PC-9 (cell line): ENCODE measurements at regions of chr17 and their contacts with region 1.

Region 1: DNA sequence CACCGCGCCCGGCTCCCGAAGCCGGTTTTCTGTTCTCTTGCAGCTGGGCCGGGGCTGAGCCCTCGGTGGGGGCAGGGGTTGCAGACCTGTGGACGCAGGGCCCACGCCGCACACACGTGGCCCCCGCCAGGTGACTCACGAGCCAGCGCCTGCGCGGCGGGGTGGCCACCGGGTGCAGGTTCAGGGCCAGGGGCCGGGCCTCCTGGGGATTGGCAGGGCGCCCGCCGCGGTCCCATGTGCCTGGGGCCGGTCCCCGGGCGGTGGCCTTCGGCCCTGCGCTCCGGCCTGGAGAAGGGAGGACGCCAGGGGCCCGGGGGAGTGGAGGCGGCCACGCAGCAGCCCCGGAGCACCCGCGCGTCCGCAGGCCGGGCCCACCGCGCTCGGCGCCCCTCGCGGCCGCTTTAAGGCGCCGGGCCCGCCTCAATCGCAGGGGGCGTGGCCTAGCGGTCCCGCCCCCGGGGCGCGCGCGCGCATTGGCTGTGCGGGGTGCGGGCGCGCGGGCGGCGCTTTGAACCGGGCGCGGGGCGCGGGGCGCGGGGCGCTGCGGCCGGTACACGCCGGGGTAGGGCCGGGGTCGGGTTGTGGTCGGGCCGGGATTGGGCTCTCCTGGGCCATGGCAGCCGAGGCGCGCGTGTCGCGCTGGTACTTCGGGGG is at the start of gene SLC25A10:
- DNase-seq: peak; percentile 75 to 96
- H3K4me3 ChIP-seq: peak within 1 kb of the TSS; percentile 77
- H3K27ac ChIP-seq: peak within 1 kb of the TSS; percentile 50
- H3K4me1 ChIP-seq: peaks cover 24% of the 10 kb centered on the region
- H3K27me3 ChIP-seq: no peaks in the 10 kb centered on the region
- CTCF ChIP-seq: no peak
- total RNA-seq, gene SLC25A10: 83.6 and 86.5 TPM in 2 replicates

Region 2: GRCh38 chr17:81553018-81553615 is 158.8 kb before region 1 on chr17:
- CTCF ChIA-PET with region 1: no interaction called
- POLR2A ChIA-PET with region 1: interaction called, 14 read pairs
- intact Hi-C with region 1: no loop called
- DNase-seq: peak; percentile 78 to 85
- H3K4me3 ChIP-seq: peak overlapping the region; percentile 62
- H3K27ac ChIP-seq: 0 out of 2 replicates have a peak overlapping the region, but pooled peaks have one; percentile 16
- H3K4me1 ChIP-seq: peaks cover 10% of the 10 kb centered on the region
- H3K27me3 ChIP-seq: no peaks in the 10 kb centered on the region
- CTCF ChIP-seq: no peak

Region 3: GRCh38 chr17:81636505-81637288 is 75.2 kb before region 1 on chr17 and contains the starts of genes NPLOC4 and TSPAN10:
- CTCF ChIA-PET with region 1: no interaction called
- POLR2A ChIA-PET with region 1: no interaction called
- intact Hi-C with region 1: loop called (anchors 5 kb)
- DNase-seq: peak; percentile 41 to 92
- H3K4me3 ChIP-seq: peak within 1 kb of the TSS; percentile 96
- H3K27ac ChIP-seq: peak within 1 kb of the TSS; percentile 71
- H3K4me1 ChIP-seq: peaks cover 11% of the 10 kb centered on the region; the same call in 1 of the 2 replicates
- H3K27me3 ChIP-seq: no peaks in the 10 kb centered on the region
- CTCF ChIP-seq: no peak
- total RNA-seq, gene NPLOC4: 154 and 208 TPM in 2 replicates
- total RNA-seq, gene TSPAN10: 8.6 and 15.0 TPM in 2 replicates

Region 4: DNA sequence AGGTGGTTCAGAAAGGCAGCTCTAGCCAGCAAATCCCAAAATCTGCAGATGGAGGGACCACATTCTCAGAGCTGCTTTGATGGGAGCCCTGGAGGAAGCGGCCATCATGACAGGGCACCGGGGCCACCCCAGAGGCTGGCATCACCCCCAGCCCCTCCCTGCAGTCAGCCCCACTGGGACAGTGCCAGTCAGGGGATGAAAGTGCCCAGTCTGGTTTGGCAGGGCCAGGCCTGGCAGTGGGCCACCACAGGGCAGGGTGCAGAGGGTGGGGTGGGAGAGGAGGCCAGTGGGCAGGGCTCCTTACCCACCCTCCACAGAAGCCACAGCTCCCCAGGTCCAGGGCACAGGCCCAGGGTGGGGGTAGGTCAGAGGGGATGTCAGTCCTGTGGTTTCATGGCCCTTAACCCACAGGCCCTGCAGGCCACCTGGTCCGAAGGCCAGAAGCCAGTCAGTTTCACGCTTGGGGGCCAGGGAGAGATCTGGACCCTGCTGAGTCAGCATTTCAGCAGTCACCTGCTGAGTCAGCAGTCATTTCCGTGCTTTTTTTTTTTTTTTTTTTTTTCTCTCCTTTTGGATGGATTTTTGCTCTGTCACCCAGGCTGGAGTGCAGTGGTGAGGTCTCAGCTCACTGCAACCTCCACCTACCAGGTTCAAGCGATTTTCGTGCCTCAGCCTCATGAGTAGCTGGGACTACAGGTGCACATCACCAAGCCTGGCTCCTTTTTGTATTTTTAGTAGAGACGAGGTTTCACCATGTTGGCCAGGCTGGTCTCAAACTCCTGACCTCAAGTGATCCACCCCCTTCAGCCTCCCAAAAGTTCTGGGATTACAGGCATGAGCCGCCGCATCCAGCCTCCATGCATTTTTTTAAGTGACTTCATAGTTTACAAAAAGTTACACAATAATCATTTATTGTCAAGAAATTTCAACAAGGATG is 10.5 kb after region 1 on chr17:
- CTCF ChIA-PET with region 1: no interaction called
- POLR2A ChIA-PET with region 1: interaction called, 3 read pairs
- intact Hi-C with region 1: loop called (anchors 1 kb)
- DNase-seq: peak; percentile 79 to 99
- H3K4me3 ChIP-seq: no peak overlapping the region
- H3K27ac ChIP-seq: peak overlapping the region; percentile 68
- H3K4me1 ChIP-seq: peaks cover 27% of the 10 kb centered on the region
- H3K27me3 ChIP-seq: no peaks in the 10 kb centered on the region
- CTCF ChIP-seq: no peak

Region 5: DNA sequence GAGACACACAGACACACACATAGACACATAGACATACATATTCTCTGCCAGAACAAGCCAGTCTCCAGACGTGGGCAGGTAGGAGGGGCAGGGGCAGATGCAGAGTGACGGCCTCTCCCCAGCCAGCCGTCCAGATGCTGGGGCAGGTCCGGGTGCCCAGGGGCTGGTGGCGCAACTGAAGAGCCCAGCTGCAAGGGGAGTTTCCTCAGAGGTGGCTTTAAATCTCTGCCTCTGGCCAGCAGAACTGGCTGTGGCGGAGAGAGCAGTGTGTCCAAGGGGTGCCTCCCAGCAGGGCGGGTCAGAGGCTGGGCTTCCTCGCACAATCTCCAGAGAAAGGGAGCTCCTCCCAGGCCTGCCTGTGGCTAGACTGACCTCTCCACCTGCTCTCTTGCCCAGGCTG is 82.6 kb after region 1 on chr17:
- CTCF ChIA-PET with region 1: no interaction called
- POLR2A ChIA-PET with region 1: interaction called, 10 read pairs
- intact Hi-C with region 1: no loop called
- DNase-seq: peak; percentile 56 to 84
- H3K4me3 ChIP-seq: no peak overlapping the region
- H3K27ac ChIP-seq: no peak overlapping the region
- H3K4me1 ChIP-seq: 0 out of 2 replicates have a peak, but pooled peaks cover 7% of the 10 kb centered on the region
- H3K27me3 ChIP-seq: no peaks in the 10 kb centered on the region
- CTCF ChIP-seq: no peak

Region 6: DNA sequence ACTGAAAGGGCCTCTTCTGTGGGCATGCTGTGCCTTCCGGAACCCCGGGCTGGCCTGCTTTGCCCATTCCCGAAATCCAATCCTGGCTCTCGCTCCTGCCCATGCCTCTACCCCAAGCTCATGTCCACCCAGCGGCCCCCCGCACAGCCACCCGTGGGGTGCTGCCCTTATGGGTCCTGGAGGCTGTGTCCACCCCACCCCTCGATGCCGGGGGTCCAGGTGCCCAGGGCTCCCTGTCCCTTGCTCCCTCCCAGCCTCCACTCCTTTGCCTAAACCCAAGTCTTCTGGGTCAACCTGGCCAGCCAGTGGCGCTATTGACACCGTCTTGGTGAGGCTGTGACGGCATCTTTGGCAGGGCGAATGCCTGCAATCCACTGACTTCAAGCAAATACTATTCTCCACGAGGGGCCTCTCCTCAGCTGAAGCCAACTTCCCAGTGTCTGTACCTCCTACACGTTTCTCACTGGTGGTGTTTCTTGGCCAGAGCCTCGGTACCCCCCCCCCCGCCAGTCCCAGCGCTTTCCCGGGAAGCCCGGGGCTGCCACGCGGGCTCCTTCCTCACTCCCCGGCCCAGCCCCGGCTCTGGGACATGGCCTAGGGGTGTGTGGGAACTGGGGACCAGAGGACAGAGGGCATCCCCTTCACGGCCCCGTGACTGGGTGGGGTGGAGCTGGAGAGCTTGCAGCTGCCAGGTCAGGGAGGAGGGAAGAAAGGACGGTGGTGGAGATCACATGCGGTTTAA is 365.8 kb after region 1 on chr17:
- CTCF ChIA-PET with region 1: no interaction called
- POLR2A ChIA-PET with region 1: interaction called, 18 read pairs
- intact Hi-C with region 1: no loop called
- DNase-seq: no peak
- H3K4me3 ChIP-seq: no peak overlapping the region
- H3K27ac ChIP-seq: no peak overlapping the region
- H3K4me1 ChIP-seq: no peaks in the 10 kb centered on the region
- H3K27me3 ChIP-seq: no peaks in the 10 kb centered on the region
- CTCF ChIP-seq: no peak